K562 (cell line): ENCODE measurements at regions of chr11 and their contacts with region 1.

Region 1: DNA sequence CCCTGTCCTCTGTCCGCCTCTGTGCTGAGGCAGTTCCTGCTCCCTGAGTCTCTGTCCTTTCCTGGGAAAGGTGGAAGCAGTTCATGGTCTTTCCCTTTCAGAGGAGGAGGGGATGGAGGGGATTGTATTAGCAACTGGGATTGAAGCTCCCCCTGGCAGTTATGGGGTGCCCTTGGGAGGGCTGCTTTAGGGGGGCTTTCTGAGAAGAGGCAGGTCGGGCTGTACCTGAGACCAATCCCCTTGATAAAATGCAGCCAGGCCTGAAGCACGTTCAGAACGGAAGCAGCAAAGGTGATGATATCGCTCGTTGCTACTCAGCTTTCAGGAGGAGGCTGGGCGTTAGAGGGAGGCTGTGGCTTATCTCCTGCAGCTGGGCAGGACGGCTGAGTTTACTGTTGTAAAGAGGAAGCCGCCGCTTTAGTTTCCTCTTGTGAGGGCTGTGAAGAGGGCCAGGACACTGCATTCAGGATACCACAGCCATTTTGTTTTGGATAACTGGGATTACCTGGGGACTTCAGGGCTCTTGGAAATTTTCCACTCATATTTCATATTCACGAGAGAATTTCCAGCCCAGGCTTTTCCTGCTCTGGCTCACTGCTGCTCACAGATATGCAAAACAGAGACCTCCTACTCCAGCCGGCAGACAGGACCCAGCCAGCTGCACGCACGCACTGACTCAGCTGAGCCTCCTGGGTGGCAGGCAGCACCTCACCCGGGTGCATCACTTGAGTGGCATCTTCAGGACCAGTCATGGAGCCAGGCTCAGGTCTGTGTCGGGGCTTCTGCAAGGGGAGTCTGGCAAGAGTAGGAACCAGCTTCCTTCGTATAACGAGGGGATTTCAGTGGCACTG is 798 bp downstream of the AMPD3 start:
- DNase-seq: peak; percentile 63 to 95 (median 78)
- ATAC-seq: peak; percentile 89
- H3K4me3 ChIP-seq: peak overlapping the region; percentile 49
- H3K27ac ChIP-seq: peak overlapping the region; percentile 89
- H3K4me1 ChIP-seq: peaks cover 32 to 38% of the 10 kb centered on the region in 2 experiments
- H3K27me3 ChIP-seq: no peaks in the 10 kb centered on the region
- CTCF ChIP-seq: no peak
- EP300 ChIP-seq: peak; percentile 86
- POLR2A ChIP-seq: peak; percentile 78
- RAD21 ChIP-seq: 0 out of 4 replicates have a peak, but pooled peaks of 1 of the 2 experiments have one; percentile 6

Region 2: GRCh38 chr11:10413268-10413667 is 42.6 kb before region 1 on chr11:
- CTCF ChIA-PET with region 1: no interaction called
- POLR2A ChIA-PET with region 1: interaction called, 9 read pairs
- in situ Hi-C with region 1: no loop called
- intact Hi-C with region 1: loop called (anchors 5 kb)
- DNase-seq: peak in 1 of 4 experiments; percentile 61
- ATAC-seq: peak; percentile 83
- H3K4me3 ChIP-seq: no peak overlapping the region
- H3K27ac ChIP-seq: no peak overlapping the region
- H3K4me1 ChIP-seq: peaks cover 12 to 19% of the 10 kb centered on the region in 2 experiments; a peak in 2 of 5 replicates
- H3K27me3 ChIP-seq: no peaks in the 10 kb centered on the region
- CTCF ChIP-seq: peak; percentile 45 to 66 (median 56); a peak in 5 of 6 replicates
- EP300 ChIP-seq: no peak
- POLR2A ChIP-seq: no peak
- RAD21 ChIP-seq: peak; percentile 80 to 93

Region 3: GRCh38 chr11:10490398-10491241 is 34.8 kb after region 1 on chr11:
- CTCF ChIA-PET with region 1: no interaction called
- POLR2A ChIA-PET with region 1: interaction called, 6 read pairs
- in situ Hi-C with region 1: no loop called
- intact Hi-C with region 1: loop called (anchors 5 kb)
- DNase-seq: peak; percentile 83 to 93 (median 90)
- ATAC-seq: peak; percentile 98
- H3K4me3 ChIP-seq: no peak overlapping the region
- H3K27ac ChIP-seq: peak overlapping the region; percentile 72
- H3K4me1 ChIP-seq: peaks cover 10 to 16% of the 10 kb centered on the region in 2 experiments; a peak in 4 of 5 replicates
- H3K27me3 ChIP-seq: no peaks in the 10 kb centered on the region
- CTCF ChIP-seq: no peak
- EP300 ChIP-seq: peak; percentile 69
- POLR2A ChIP-seq: no peak
- RAD21 ChIP-seq: no peak

Region 4: DNA sequence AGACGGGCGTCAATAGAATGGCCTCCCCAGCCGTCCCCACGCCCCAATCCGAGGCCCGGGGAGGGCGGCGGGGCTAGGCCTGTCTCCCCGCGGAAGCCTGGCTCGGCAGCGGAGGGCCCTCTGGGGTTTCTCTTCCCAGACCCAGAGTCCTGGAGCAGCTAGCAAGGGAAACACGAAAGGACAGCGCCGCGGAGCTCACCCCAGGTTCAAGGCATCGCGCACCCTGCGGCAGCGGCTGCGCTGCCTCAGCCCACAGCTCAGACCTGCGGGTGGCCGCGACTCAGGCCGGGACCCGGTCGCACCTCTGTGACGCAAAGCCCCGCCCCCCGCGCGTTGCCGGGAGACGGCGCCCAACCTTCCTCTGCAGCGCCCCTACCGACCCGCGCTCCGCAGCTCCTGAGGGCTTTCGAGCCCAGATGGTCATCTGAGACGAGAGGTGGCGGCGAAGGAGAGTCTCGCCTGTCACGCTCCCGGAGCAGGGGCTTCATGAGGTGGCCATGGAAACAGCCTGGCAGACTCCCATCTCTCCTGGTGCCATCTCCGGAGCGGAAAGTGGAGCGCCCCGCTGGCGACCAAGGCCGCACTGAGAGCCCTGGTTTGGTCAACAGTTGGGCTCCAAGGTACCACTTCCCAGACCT is 85.2 kb after region 1 on chr11 and contains the start of gene RNF141:
- CTCF ChIA-PET with region 1: no interaction called
- POLR2A ChIA-PET with region 1: interaction called, 5 read pairs
- in situ Hi-C with region 1: no loop called
- intact Hi-C with region 1: loop called (anchors 5 kb)
- DNase-seq: peak; percentile 95 to 97 (median 96)
- ATAC-seq: peak; percentile 97
- H3K4me3 ChIP-seq: peak within 1 kb of the TSS; percentile 74
- H3K27ac ChIP-seq: peak within 1 kb of the TSS; percentile 86
- H3K4me1 ChIP-seq: peaks cover 8 to 11% of the 10 kb centered on the region in 2 experiments; a peak in 4 of 5 replicates
- H3K27me3 ChIP-seq: no peaks in the 10 kb centered on the region
- CTCF ChIP-seq: peak; percentile 87 to 93 (median 87)
- EP300 ChIP-seq: no peak
- POLR2A ChIP-seq: peak; percentile 96
- RAD21 ChIP-seq: no peak; a peak in 2 of 4 replicates
- polyA plus RNA-seq, gene RNF141: 44.6 to 51.9 TPM